ENCODE measurements at regions of chr15 and their contacts with region 1.

Region 1: DNA sequence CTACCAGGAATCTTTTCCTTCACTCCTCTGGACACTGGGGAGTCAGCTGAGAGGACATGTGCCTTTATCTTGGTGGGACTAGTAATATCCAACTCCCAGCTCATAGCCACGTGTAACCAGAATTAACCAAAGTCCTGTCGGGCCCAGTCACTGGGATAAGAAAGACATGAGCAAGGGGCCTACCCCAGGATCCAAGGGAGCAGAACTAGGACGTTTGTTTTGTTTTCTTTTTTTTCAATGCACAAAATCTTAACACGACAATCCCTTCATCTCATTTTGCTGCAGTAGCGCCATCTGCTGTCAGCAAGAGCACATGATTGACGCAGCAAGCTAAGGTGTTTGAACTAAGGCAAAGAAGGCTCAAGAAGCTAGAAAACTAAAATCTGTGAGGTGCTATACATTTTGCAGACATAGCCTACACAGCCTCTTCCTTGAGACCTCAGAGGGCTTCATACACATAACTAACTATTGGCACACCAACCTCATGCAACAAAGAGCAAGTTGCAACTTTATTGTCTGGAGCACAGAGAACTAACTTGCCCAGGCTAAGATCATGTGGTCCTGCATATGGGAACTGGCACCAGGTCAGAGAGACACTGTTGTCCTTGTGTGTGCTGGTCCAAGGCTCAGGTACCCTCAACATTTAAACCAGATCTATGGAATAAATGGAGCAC is 43.6 kb downstream of the RLBP1 start:
- DNase-seq: peak; percentile 69 to 76 (median 72)
- ATAC-seq: peak; percentile 63
- H3K4me3 ChIP-seq: no peak overlapping the region
- H3K27ac ChIP-seq: no peak overlapping the region
- H3K4me1 ChIP-seq: peaks cover 6% of the 10 kb centered on the region
- H3K27me3 ChIP-seq: no peaks in the 10 kb centered on the region
- CTCF ChIP-seq: peak; percentile 54 to 84 (median 74)
- POLR2A ChIP-seq: no peak

Region 2: DNA sequence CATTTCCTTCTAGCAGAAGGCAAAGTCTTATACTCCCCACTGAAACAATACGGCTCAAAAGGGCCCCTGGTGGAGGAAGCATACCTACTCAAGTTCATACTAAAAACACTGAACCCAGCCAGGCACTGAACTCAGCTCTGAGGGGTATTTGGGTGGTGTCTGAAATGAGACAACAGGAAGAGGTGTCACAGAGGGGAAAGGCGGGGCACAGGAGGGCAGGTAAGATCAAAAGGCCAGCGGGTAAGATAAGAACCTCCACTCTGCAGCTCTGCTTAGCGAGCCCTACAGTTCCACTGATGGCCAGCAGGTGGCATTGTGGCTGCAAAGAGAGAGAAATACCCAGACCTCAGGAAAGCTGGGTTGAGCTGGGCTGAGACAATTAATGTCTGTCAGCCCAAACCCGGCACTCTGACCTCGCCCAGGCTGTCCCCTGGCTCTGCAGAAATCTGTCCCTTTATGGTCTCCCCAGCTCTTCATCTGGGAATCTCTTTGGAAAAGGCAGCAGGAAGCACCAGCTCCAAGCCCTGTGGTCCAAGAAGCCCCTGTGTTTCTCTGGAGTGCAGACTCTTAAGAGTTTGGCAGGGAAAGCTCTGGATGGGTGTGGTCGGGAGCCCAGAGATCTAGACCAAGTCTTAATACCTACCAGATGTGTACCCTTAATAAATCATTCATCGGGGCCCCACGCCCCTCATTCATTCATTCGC is 273.0 kb before region 1 on chr15:
- intact Hi-C with region 1: loop called (anchors 10 kb)
- DNase-seq: peak; percentile 76 to 84 (median 80)
- ATAC-seq: peak; percentile 82
- H3K4me3 ChIP-seq: no peak overlapping the region
- H3K27ac ChIP-seq: no peak overlapping the region
- H3K4me1 ChIP-seq: peaks cover 7% of the 10 kb centered on the region
- H3K27me3 ChIP-seq: no peaks in the 10 kb centered on the region
- CTCF ChIP-seq: peak; percentile 87 to 99 (median 93)
- POLR2A ChIP-seq: no peak

Region 3: DNA sequence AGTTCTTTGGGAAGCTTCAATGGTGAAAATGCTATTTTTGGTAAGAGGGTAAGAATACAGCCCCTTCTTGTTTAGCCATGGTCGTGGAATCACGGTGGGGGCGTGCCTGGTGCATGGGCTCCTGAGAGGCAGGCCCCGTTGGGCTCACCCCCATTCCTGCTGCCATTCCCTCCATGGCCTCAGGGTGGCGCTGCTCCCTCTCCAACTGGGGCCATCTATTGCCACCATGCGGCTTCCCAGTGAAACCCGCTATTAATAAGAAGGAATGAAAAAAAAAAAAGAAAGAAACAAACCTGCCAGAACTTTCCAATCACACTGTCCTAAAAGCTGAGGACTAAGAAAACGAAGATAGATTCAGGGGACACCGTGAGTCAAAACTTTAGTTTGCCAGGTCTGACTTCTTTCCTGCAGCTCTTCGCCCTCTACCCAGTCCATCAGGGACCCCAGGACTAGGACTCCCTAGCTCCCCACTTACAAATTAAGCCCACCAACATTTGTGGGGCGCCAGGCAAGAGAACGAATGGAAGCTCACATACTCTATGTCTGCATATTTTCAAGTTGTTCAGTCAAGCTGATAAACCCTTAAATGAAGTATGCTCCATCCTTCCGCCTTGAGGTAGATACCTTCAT is 120.2 kb before region 1 on chr15:
- intact Hi-C with region 1: loop called (anchors 5 kb)
- DNase-seq: peak; percentile 82 to 89 (median 86)
- ATAC-seq: peak; percentile 88
- H3K4me3 ChIP-seq: no peak overlapping the region
- H3K27ac ChIP-seq: no peak overlapping the region
- H3K4me1 ChIP-seq: peaks cover 8% of the 10 kb centered on the region
- H3K27me3 ChIP-seq: no peaks in the 10 kb centered on the region
- CTCF ChIP-seq: peak; percentile 92 to 100 (median 98)
- POLR2A ChIP-seq: no peak

Region 4: GRCh38 chr15:89143503-89144162 is 34.1 kb before region 1 on chr15:
- intact Hi-C with region 1: loop called (anchors 5 kb)
- DNase-seq: peak in 1 of 4 donors; percentile 55
- ATAC-seq: peak; percentile 84
- H3K4me3 ChIP-seq: no peak overlapping the region
- H3K27ac ChIP-seq: peak overlapping the region; percentile 16 to 68 (median 50)
- H3K4me1 ChIP-seq: peaks cover 55% of the 10 kb centered on the region
- H3K27me3 ChIP-seq: no peaks in the 10 kb centered on the region
- CTCF ChIP-seq: no peak
- POLR2A ChIP-seq: no peak

Region 5: DNA sequence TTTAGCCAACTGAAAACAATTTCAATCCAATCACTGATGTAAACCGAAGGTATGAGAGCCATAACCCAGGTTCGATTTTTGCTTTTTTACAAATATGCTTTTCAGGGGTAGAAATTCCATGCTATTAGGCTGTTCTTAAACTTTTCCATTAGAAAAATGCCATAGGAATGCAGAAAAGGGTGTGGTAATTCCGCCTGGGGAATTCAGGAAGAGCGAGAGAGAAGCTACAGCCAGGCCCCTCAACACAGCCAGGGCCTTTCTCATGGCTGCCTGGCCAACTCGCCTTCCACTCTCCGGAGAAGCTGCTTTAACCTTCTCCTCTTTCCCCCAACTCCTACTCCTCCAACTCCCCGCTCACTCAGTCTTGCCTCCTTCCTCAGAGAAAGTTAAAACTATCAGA is 388.4 kb after region 1 on chr15:
- intact Hi-C with region 1: no loop called
- DNase-seq: no peak
- ATAC-seq: no peak
- H3K4me3 ChIP-seq: no peak overlapping the region
- H3K27ac ChIP-seq: no peak overlapping the region
- H3K4me1 ChIP-seq: no peaks in the 10 kb centered on the region
- H3K27me3 ChIP-seq: no peaks in the 10 kb centered on the region
- CTCF ChIP-seq: no peak
- POLR2A ChIP-seq: no peak

Region 6: DNA sequence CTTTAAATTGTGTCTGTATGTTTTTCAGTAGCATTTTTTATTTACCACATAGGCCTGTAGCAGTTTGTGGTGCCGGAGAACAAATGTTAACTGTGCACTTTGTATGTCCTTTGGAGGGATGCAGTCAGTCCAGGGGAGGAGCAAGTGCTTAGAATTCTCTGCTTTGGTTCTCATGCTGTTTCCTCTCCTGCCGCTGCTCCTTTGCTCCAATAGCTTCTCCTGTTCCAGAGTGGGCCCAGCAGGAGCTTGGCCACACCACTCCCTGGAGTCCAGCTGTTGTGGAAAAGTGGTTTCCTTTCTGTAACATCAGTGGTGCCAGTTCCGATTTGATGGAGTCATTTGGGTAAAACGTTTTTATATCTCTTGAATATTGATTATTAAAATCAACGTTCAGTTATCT is 414.1 kb after region 1 on chr15:
- intact Hi-C with region 1: no loop called
- DNase-seq: no peak
- ATAC-seq: no peak
- H3K4me3 ChIP-seq: no peak overlapping the region
- H3K27ac ChIP-seq: no peak overlapping the region
- H3K4me1 ChIP-seq: no peaks in the 10 kb centered on the region
- H3K27me3 ChIP-seq: no peaks in the 10 kb centered on the region
- CTCF ChIP-seq: no peak
- POLR2A ChIP-seq: no peak